ENCODE measurements at regions of chr19 and their contacts with region 1.

Region 1: GRCh38 chr19:3434712-3435553 is 45.4 kb downstream of the SMIM24 start:
- DNase-seq: peak; percentile 76 to 91 (median 84)
- ATAC-seq: peak; percentile 82
- H3K4me3 ChIP-seq: no peak overlapping the region
- H3K27ac ChIP-seq: peak overlapping the region; percentile 26 to 70 (median 63)
- H3K4me1 ChIP-seq: peaks cover 16% of the 10 kb centered on the region
- H3K27me3 ChIP-seq: no peaks in the 10 kb centered on the region
- CTCF ChIP-seq: no peak
- POLR2A ChIP-seq: peak in 2 of 3 donors; percentile 24 to 25

Region 2: DNA sequence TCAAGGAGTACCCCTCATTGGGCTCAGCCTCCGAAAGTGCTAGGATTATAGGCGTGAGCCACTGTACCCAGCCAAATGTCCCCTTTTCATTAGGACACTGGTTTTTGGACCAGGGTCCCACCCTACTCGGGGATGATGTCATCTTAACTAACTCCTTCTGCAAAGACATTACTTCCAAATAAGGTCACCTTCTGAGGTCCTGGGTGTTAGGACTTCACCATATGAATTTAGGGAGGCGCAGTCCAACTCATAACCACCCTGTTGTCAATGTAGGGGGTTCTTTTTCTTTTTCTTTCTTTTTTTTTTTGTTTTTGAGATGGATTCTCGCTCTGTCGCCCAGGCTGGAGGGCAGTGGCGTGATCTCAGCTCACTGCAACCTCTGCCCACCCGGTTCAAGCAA is 101.3 kb before region 1 on chr19:
- intact Hi-C with region 1: loop called (anchors 5 kb)
- DNase-seq: no peak
- ATAC-seq: no peak
- H3K4me3 ChIP-seq: no peak overlapping the region
- H3K27ac ChIP-seq: peak overlapping the region in 1 of 4 donors; percentile 35
- H3K4me1 ChIP-seq: peaks cover 57% of the 10 kb centered on the region
- H3K27me3 ChIP-seq: no peaks in the 10 kb centered on the region
- CTCF ChIP-seq: no peak
- POLR2A ChIP-seq: no peak

Region 3: DNA sequence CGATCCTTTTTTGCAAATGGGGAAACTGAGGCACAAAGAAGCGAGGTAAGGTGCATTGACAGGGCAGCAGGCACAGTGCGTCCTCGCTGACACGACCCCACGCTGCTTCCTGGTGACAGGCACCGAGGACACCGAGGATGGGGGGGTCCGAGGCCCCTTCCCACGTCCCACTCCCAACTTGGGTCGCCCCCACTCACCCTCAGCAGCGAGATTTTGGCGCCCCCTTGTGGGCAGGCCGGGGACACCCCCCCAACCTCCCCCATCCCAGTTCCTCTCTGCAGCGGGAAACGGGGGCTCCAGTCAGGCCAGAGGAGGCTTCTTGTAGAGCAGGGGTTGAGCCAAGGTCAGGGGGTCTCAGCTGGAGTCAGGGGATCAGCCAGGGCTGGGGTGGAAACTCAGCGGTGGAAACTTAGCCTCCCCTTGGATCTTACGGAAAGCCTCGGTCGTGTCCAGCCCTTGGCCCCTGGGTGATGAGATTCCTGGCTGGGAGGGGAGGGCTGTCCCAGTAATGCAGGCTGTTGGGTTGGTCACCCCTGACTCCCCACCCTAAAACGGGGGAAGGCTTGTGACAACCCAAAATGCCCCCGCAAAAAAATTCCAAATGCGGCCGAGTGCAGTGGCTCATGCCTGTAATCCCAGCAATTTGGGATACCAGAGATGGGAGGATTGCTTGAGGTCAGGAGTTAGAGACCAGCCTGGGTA is 37.2 kb after region 1 on chr19:
- intact Hi-C with region 1: loop called (anchors 5 kb)
- DNase-seq: peak in 2 of 4 donors; percentile 35 to 53
- ATAC-seq: peak; percentile 37
- H3K4me3 ChIP-seq: no peak overlapping the region
- H3K27ac ChIP-seq: no peak overlapping the region
- H3K4me1 ChIP-seq: peaks cover 24% of the 10 kb centered on the region
- H3K27me3 ChIP-seq: no peaks in the 10 kb centered on the region
- CTCF ChIP-seq: peak; percentile 52 to 84 (median 73)
- POLR2A ChIP-seq: no peak

Measured in body of pancreas (tissue), 4 donors.